ENCODE measurements at regions of chr5 and their contacts with region 1.

Region 1: DNA sequence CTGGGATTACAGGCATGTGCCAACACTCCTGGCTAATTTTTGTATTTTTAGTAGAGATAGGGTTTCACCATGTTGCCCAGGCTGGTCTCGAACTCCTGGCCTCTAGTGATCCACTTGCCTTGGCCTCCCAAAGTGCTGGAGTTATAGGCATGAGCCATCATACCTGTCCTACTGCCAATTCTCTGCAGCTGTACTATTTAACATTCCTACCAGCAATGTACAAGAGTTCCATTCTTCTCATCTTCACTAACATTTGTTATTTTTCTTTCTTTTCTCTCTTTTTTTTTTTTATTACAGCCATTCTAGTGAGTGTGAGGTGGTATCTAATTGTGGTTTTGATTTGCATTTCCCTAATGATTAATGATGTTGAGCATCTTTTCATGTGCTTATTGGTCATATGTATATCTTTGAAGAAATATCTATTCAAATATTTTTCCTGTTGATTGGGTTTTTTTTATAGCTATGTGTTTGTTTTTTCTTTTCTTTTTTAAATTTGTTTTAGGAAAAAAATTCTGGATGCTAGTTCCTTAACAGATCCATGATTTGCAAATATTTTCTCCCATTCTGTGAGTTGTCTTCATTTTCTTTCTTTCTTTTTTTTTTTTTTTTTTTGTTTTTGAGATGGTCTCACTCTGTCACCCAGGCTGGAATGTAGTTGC is 17.4 kb downstream of the ANKHD1 start:
- DNase-seq: peak; percentile 9
- ATAC-seq: no peak; the same call in 1 of the 2 replicates
- H3K4me3 ChIP-seq: no peak overlapping the region
- H3K27ac ChIP-seq: no peak overlapping the region
- H3K4me1 ChIP-seq: no peaks in the 10 kb centered on the region
- H3K27me3 ChIP-seq: no peaks in the 10 kb centered on the region
- CTCF ChIP-seq: no peak
- POLR2A ChIP-seq: no peak
- RAD21 ChIP-seq: no peak

Region 2: DNA sequence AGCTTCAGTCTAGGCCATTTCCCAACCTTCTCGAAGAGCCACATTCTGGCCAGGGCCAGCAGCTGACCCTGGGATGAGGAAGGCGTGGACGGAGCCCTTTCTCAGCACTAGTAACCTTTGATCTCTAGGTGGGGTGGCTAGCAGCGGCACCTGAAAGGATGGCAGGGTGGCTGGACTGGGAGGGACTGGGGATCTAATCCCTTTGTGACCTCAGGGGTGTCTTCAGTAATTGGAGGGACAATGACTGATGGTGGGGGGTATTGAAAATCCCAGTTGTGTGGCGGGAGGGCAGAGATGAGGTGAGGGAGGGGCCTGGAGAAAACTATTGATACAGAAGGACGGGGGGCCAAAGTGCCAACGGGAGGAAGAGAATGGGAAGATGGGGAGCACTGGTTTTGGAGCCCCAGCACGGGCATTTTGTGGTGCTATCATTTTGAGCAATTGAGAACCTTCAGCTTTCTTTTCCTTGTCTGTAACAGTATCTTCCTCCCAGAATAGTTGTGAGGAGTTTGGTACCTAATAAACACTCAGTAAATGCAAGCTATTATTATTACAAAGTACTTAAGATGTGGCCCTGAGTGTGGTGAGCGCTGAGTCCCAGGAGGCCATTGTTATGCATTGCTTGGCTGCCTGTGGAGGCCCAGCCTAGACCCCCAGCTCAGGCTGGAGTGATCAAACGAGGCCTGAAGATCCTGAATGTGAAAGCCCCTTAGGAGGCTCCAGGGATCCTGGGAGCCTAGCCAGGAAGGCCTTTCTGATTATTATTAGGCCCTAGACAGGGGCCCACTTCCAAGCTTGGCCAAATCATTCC is 895.2 kb before region 1 on chr5:
- CTCF ChIA-PET with region 1: no interaction called
- POLR2A ChIA-PET with region 1: interaction called, 10 read pairs
- dilution Hi-C with region 1: no loop called
- in situ Hi-C with region 1: no loop called
- intact Hi-C with region 1: no loop called
- DNase-seq: no peak
- ATAC-seq: no peak
- H3K4me3 ChIP-seq: no peak overlapping the region
- H3K27ac ChIP-seq: no peak overlapping the region
- H3K4me1 ChIP-seq: no peaks in the 10 kb centered on the region
- H3K27me3 ChIP-seq: no peaks in the 10 kb centered on the region; the same call in 1 of the 2 replicates
- CTCF ChIP-seq: no peak
- POLR2A ChIP-seq: no peak
- RAD21 ChIP-seq: no peak

Region 3: GRCh38 chr5:140145818-140146522 is 273.0 kb before region 1 on chr5:
- CTCF ChIA-PET with region 1: no interaction called
- POLR2A ChIA-PET with region 1: no interaction called
- dilution Hi-C with region 1: no loop called
- in situ Hi-C with region 1: no loop called
- intact Hi-C with region 1: no loop called
- DNase-seq: peak; percentile 66
- ATAC-seq: peak; percentile 96
- H3K4me3 ChIP-seq: peak overlapping the region; percentile 36
- H3K27ac ChIP-seq: no peak overlapping the region
- H3K4me1 ChIP-seq: no peaks in the 10 kb centered on the region; the same call in 1 of the 2 replicates
- H3K27me3 ChIP-seq: no peaks in the 10 kb centered on the region; the same call in 1 of the 2 replicates
- CTCF ChIP-seq: peak; percentile 79
- POLR2A ChIP-seq: no peak
- RAD21 ChIP-seq: peak; percentile 54

Region 4: GRCh38 chr5:140391312-140391711 is 27.7 kb before region 1 on chr5:
- CTCF ChIA-PET with region 1: no interaction called
- POLR2A ChIA-PET with region 1: no interaction called
- dilution Hi-C with region 1: no loop called
- in situ Hi-C with region 1: no loop called
- intact Hi-C with region 1: loop called (anchors 1 kb)
- DNase-seq: no peak
- ATAC-seq: no peak; the same call in 1 of the 2 replicates
- H3K4me3 ChIP-seq: no peak overlapping the region
- H3K27ac ChIP-seq: no peak overlapping the region
- H3K4me1 ChIP-seq: no peaks in the 10 kb centered on the region
- H3K27me3 ChIP-seq: no peaks in the 10 kb centered on the region
- CTCF ChIP-seq: no peak
- POLR2A ChIP-seq: no peak
- RAD21 ChIP-seq: no peak